ENCODE measurements at regions of chr13 and their contacts with region 1.

Region 1: GRCh38 chr13:57631521-57632275 is at the start of gene PCDH17:
- DNase-seq: peak; percentile 54
- ATAC-seq: peak; percentile 1
- H3K4me3 Mint-ChIP-seq: peak within 1 kb of the TSS; percentile 92
- H3K27ac Mint-ChIP-seq: no peak within 1 kb of the TSS
- H3K4me1 Mint-ChIP-seq: peaks cover 43% of the 10 kb centered on the region
- H3K27me3 Mint-ChIP-seq: peaks cover 90% of the 10 kb centered on the region
- CTCF ChIP-seq: no peak
- total RNA-seq, gene PCDH17: 0.85 to 1.1 TPM (median 0.89 TPM) in 3 replicates

Region 2: GRCh38 chr13:57443494-57443893 is 188.2 kb before region 1 on chr13:
- CTCF ChIA-PET with region 1: no interaction called
- POLR2A ChIA-PET with region 1: no interaction called
- DNase-seq: no peak
- ATAC-seq: no peak
- H3K4me3 Mint-ChIP-seq: no peak overlapping the region
- H3K27ac Mint-ChIP-seq: no peak overlapping the region
- H3K4me1 Mint-ChIP-seq: peaks cover 9% of the 10 kb centered on the region
- H3K27me3 Mint-ChIP-seq: no peaks in the 10 kb centered on the region
- CTCF ChIP-seq: no peak

Region 3: GRCh38 chr13:57673197-57673596 is 41.5 kb after region 1 on chr13:
- CTCF ChIA-PET with region 1: interaction called, 19 read pairs
- POLR2A ChIA-PET with region 1: no interaction called
- DNase-seq: no peak
- ATAC-seq: peak; percentile 54
- H3K4me3 Mint-ChIP-seq: no peak overlapping the region
- H3K27ac Mint-ChIP-seq: peak overlapping the region; percentile 31; the same call in 1 of the 2 replicates
- H3K4me1 Mint-ChIP-seq: peaks cover 38% of the 10 kb centered on the region
- H3K27me3 Mint-ChIP-seq: no peaks in the 10 kb centered on the region
- CTCF ChIP-seq: no peak

Region 4: GRCh38 chr13:57716295-57716694 is 84.6 kb after region 1 on chr13:
- CTCF ChIA-PET with region 1: interaction called, 122 read pairs
- POLR2A ChIA-PET with region 1: interaction called, 4 read pairs
- DNase-seq: peak; percentile 32
- ATAC-seq: peak; percentile 99
- H3K4me3 Mint-ChIP-seq: no peak overlapping the region
- H3K27ac Mint-ChIP-seq: no peak overlapping the region
- H3K4me1 Mint-ChIP-seq: peaks cover 16% of the 10 kb centered on the region
- H3K27me3 Mint-ChIP-seq: peaks cover 5% of the 10 kb centered on the region; the same call in 1 of the 2 replicates
- CTCF ChIP-seq: no peak

Measured in WTC11 (cell line).